ENCODE measurements at regions of chr11 and their contacts with region 1.

Region 1: DNA sequence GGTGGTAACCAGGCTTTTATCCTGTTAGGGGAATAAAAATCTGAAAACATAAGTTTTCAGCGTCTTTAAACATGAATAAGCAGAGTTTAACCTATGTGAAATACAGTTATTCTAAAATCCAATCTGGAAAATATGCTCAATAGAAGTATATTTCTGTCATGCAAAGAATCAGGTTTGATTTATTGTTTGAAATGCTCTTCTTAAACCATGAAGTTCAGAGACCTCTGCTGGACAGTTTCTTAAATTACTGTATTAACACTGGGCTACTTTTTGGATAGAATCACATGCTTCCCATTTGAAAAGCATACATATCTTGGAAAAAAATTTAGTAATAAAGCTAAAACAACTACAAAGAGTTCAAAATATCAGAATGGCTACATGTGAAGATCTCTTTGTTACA is 25.4 kb downstream of the APIP start:
- DNase-seq: peak; percentile 78
- ATAC-seq: peak; percentile 68; the same call in 1 of the 2 replicates
- H3K4me3 ChIP-seq: no peak overlapping the region
- H3K27ac ChIP-seq: peak overlapping the region; percentile 37
- H3K4me1 ChIP-seq: peaks cover 17% of the 10 kb centered on the region
- H3K27me3 ChIP-seq: no peaks in the 10 kb centered on the region
- CTCF ChIP-seq: peak; percentile 72

Region 2: DNA sequence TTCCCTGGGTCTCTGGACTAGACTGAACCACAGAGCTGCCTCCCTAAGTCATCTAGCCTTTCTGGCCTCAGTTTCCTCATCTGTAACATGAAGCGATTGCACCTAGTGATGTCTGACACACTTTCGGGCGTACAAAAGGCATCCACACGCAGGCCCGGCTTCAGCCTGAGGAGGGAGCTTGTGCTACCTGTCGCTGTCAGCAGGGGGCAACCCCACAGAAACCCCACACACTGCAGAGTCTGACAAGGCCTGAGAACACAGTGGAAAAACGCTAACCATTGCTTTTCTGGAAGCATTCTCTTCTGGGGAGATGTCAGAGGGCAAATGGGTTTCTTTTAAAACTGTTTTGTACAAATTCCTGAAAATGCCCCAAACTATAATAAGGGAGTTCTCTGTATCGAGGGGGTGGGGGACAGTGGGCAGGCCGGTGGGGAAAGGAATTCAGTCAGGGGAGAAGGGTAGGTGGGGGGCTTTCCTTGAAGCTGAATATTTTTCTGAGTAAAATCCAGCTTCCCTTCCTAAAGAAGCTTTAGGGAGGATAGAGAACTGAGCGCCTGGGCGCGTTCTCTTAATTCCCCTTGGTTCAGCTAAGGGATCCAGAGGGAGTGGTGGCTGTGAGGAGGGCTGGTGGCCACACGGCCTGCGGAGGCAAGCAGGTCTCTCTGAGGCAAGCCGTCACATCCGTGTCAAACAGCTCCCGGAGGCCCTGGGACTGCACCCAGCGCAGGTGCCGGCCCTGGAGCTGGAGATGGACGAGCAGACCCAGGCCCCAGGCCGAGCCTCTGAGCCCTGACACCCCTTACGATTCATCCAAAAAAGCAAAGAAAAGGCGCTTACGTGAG is 377.8 kb before region 1 on chr11:
- CTCF ChIA-PET with region 1: no interaction called
- POLR2A ChIA-PET with region 1: no interaction called
- intact Hi-C with region 1: loop called (anchors 1 kb)
- DNase-seq: peak; percentile 70
- ATAC-seq: peak; percentile 99
- H3K4me3 ChIP-seq: no peak overlapping the region
- H3K27ac ChIP-seq: no peak overlapping the region
- H3K4me1 ChIP-seq: 0 out of 2 replicates have a peak, but pooled peaks cover 7% of the 10 kb centered on the region
- H3K27me3 ChIP-seq: no peaks in the 10 kb centered on the region
- CTCF ChIP-seq: peak; percentile 89

Region 3: GRCh38 chr11:34585735-34586487 is 304.9 kb before region 1 on chr11:
- CTCF ChIA-PET with region 1: interaction called, 10 read pairs
- POLR2A ChIA-PET with region 1: no interaction called
- intact Hi-C with region 1: loop called (anchors 1 kb)
- DNase-seq: peak; percentile 84
- ATAC-seq: peak; percentile 64
- H3K4me3 ChIP-seq: peak overlapping the region; percentile 19; the same call in 1 of the 2 replicates
- H3K27ac ChIP-seq: peak overlapping the region; percentile 60
- H3K4me1 ChIP-seq: peaks cover 25% of the 10 kb centered on the region
- H3K27me3 ChIP-seq: no peaks in the 10 kb centered on the region
- CTCF ChIP-seq: peak; percentile 83

Region 4: GRCh38 chr11:34680918-34681554 is 209.8 kb before region 1 on chr11:
- CTCF ChIA-PET with region 1: no interaction called
- POLR2A ChIA-PET with region 1: no interaction called
- intact Hi-C with region 1: loop called (anchors 10 kb)
- DNase-seq: peak; percentile 97
- ATAC-seq: peak; percentile 87
- H3K4me3 ChIP-seq: no peak overlapping the region
- H3K27ac ChIP-seq: peak overlapping the region; percentile 91
- H3K4me1 ChIP-seq: peaks cover 52% of the 10 kb centered on the region
- H3K27me3 ChIP-seq: no peaks in the 10 kb centered on the region
- CTCF ChIP-seq: no peak

Region 5: DNA sequence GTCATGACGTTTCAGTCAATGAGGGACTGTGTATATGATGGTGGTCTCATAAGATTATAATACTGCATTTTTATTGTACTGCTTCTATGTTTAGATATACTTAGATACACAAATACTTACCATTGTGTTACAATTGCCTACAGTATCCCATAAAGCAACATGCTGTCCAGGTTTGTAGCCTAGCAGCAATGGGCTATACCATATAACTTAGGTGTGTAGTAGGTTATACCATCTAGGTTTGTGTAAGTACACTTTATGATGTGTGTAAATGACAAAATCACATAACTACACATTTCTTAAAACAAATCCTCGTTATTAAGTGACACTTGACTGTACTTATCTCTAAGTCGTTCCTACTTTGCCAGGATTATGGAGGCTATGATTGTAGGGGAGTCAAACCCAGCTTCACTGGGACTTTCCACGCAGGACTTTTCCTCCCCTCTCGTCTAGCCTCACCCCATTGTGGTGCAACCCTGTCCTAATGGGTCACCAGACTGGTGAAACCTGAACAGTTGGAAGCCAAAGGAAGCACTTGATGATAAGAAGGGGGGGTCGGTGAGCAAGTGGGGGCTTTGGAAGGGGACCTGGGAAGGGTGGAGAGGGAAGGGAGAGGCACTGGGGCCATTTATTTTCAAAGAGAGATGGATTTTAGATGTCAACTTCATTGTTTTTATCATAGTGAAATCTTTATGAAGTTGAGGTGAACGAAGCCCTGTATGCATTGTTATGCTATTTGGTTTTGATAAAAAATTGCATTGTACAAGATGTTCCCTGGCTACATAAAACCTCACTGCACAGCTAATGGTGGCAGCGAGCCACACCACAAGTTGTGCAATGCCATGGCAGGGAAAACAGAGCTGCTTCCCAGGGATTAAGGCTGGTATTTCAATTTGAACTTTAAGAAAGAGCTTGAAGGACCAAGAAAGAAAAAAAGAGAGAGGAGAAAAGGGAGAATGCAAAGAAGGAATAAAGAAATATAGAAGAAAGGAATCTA is 140.8 kb before region 1 on chr11:
- CTCF ChIA-PET with region 1: no interaction called
- POLR2A ChIA-PET with region 1: no interaction called
- intact Hi-C with region 1: loop called (anchors 2 kb)
- DNase-seq: peak; percentile 91
- ATAC-seq: peak; percentile 94
- H3K4me3 ChIP-seq: peak overlapping the region; percentile 28; the same call in 1 of the 2 replicates
- H3K27ac ChIP-seq: peak overlapping the region; percentile 88
- H3K4me1 ChIP-seq: peaks cover 23% of the 10 kb centered on the region
- H3K27me3 ChIP-seq: no peaks in the 10 kb centered on the region
- CTCF ChIP-seq: no peak

Region 6: GRCh38 chr11:34791780-34792542 is 98.9 kb before region 1 on chr11:
- CTCF ChIA-PET with region 1: no interaction called
- POLR2A ChIA-PET with region 1: interaction called, 10 read pairs
- intact Hi-C with region 1: loop called (anchors 10 kb)
- DNase-seq: no peak
- ATAC-seq: no peak
- H3K4me3 ChIP-seq: no peak overlapping the region
- H3K27ac ChIP-seq: no peak overlapping the region
- H3K4me1 ChIP-seq: peaks cover 9% of the 10 kb centered on the region
- H3K27me3 ChIP-seq: no peaks in the 10 kb centered on the region
- CTCF ChIP-seq: no peak

Region 7: DNA sequence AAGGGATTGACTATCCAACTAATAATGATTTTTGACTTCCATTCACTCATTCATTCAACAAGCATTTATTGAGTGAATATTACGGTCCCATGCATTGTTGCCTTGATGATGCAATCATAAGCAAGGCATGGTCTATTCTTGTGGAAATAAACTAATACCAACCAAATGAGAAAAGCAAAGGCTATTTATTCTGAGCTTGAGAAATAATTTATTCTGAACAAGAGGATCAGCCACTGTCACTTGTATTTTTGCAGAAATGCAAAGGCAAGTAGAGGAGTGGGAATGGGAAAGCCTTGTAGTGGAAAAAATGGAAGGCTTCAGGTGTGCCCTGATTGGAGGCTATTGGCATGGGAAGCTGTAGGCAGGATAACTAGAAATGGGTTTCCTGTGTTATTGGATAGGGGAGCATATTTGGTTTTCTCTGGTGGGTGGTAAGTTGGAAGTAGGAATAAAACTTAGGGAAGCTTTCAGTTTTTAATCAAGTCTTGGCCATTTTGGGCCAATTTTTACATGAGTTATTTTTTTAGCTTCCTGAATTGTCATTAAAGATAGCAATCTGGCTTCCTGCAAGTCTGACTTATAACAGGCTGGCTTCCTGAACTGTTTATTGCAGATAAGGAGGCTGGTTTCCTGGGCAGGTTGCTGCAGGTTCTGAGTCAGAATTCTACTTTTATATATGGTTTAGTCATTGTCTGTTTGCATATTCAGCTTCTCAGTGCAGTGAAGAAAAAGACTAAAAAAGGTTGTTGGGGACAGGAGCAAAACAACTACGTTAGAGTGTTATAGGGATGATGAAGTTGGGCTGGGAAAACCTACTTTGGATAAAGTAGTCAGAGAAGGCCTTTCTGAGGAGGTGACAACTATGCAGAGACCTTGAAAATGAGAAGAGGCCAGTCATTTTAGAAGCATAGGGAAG is 81.4 kb before region 1 on chr11:
- CTCF ChIA-PET with region 1: no interaction called
- POLR2A ChIA-PET with region 1: no interaction called
- intact Hi-C with region 1: no loop called
- DNase-seq: peak; percentile 88
- ATAC-seq: peak; percentile 99
- H3K4me3 ChIP-seq: no peak overlapping the region
- H3K27ac ChIP-seq: peak overlapping the region; percentile 93
- H3K4me1 ChIP-seq: peaks cover 28% of the 10 kb centered on the region
- H3K27me3 ChIP-seq: no peaks in the 10 kb centered on the region
- CTCF ChIP-seq: no peak

Region 8: GRCh38 chr11:35363854-35364780 is 473.3 kb after region 1 on chr11:
- CTCF ChIA-PET with region 1: no interaction called
- POLR2A ChIA-PET with region 1: no interaction called
- intact Hi-C with region 1: no loop called
- DNase-seq: peak; percentile 87
- ATAC-seq: peak; percentile 84
- H3K4me3 ChIP-seq: no peak overlapping the region
- H3K27ac ChIP-seq: peak overlapping the region; percentile 51
- H3K4me1 ChIP-seq: peaks cover 31% of the 10 kb centered on the region
- H3K27me3 ChIP-seq: no peaks in the 10 kb centered on the region
- CTCF ChIP-seq: no peak

Region 9: DNA sequence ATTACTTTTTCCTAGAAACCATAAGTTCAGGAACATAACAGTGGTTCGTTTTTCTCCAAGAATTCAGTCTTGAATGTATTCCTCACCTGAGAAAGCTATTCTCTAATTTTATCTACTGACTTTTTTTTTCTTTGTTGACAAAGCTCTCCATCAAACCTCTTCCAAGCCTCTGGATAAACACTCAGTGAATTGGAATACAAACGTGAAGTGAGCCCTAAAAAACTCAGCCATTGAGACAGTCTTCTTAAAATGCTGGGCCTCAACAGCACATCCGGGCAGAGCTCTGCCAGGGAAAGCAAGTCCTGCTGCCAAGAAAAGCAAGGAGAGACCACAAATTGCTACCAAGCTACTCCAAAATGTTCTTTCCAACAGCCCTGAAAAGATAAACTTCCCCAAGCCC is 536.3 kb after region 1 on chr11:
- CTCF ChIA-PET with region 1: no interaction called
- POLR2A ChIA-PET with region 1: no interaction called
- intact Hi-C with region 1: no loop called
- DNase-seq: no peak
- ATAC-seq: no peak
- H3K4me3 ChIP-seq: no peak overlapping the region
- H3K27ac ChIP-seq: no peak overlapping the region
- H3K4me1 ChIP-seq: no peaks in the 10 kb centered on the region
- H3K27me3 ChIP-seq: peaks cover 86% of the 10 kb centered on the region
- CTCF ChIP-seq: no peak